MCF 10A (cell line): ENCODE measurements at regions of chr3 and their contacts with region 1.

Region 1: GRCh38 chr3:127455541-127456450 is 134.7 kb downstream of the TPRA1 start:
- DNase-seq: peak; percentile 76
- H3K4me3 Mint-ChIP-seq: peak overlapping the region; percentile 62
- H3K27ac Mint-ChIP-seq: no peak overlapping the region
- H3K4me1 Mint-ChIP-seq: peaks cover 28% of the 10 kb centered on the region
- H3K27me3 Mint-ChIP-seq: no peaks in the 10 kb centered on the region
- CTCF ChIP-seq: peak; percentile 98

Region 2: DNA sequence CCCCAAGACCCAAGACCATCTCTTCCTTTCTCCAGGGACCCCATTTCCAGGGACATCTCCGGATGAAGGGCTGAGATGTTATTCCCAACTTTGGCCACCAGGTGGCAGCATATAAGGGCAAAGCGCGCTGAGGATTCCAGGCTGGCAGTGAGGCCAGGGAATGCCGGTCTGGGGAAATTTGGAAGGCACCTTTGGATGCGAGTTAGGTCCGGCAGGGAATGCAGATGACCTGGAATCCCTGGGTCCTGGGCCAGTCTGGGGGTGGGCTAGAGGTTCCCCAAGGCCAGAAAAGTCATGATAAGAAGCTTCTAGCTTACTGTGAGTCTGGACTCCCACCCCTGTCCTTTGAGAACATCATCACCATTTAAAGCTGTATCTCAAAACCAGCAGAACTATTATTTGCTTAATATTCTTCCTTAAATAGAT is 933.4 kb before region 1 on chr3:
- CTCF ChIA-PET with region 1: interaction called, 5 read pairs
- POLR2A ChIA-PET with region 1: no interaction called
- intact Hi-C with region 1: loop called (anchors 2 kb)
- DNase-seq: peak; percentile 65
- H3K4me3 Mint-ChIP-seq: no peak overlapping the region
- H3K27ac Mint-ChIP-seq: no peak overlapping the region
- H3K4me1 Mint-ChIP-seq: no peaks in the 10 kb centered on the region
- H3K27me3 Mint-ChIP-seq: no peaks in the 10 kb centered on the region
- CTCF ChIP-seq: peak; percentile 90

Region 3: GRCh38 chr3:126679318-126679751 is 776.5 kb before region 1 on chr3:
- CTCF ChIA-PET with region 1: interaction called, 47 read pairs
- POLR2A ChIA-PET with region 1: no interaction called
- intact Hi-C with region 1: loop called (anchors 1 kb)
- DNase-seq: peak; percentile 80
- H3K4me3 Mint-ChIP-seq: no peak overlapping the region
- H3K27ac Mint-ChIP-seq: no peak overlapping the region
- H3K4me1 Mint-ChIP-seq: no peaks in the 10 kb centered on the region
- H3K27me3 Mint-ChIP-seq: peaks cover 17% of the 10 kb centered on the region
- CTCF ChIP-seq: peak; percentile 98

Region 4: GRCh38 chr3:126982471-126983175 is 473.2 kb before region 1 on chr3 and contains the start of gene PLXNA1:
- CTCF ChIA-PET with region 1: interaction called, 9 read pairs
- POLR2A ChIA-PET with region 1: interaction called, 16 read pairs
- intact Hi-C with region 1: loop called (anchors 2 kb)
- DNase-seq: peak; percentile 83
- H3K4me3 Mint-ChIP-seq: peak within 1 kb of the TSS; percentile 69
- H3K27ac Mint-ChIP-seq: no peak within 1 kb of the TSS
- H3K4me1 Mint-ChIP-seq: peaks cover 22% of the 10 kb centered on the region
- H3K27me3 Mint-ChIP-seq: no peaks in the 10 kb centered on the region
- CTCF ChIP-seq: peak; percentile 93
- total RNA-seq, gene PLXNA1: 42.1 and 48.4 TPM in 2 replicates

Region 5: GRCh38 chr3:127002195-127003174 is 453.3 kb before region 1 on chr3:
- CTCF ChIA-PET with region 1: interaction called, 3 read pairs
- POLR2A ChIA-PET with region 1: interaction called, 4 read pairs
- intact Hi-C with region 1: loop called (anchors 2 kb)
- DNase-seq: peak; percentile 75
- H3K4me3 Mint-ChIP-seq: peak overlapping the region; percentile 65
- H3K27ac Mint-ChIP-seq: peak overlapping the region; percentile 94
- H3K4me1 Mint-ChIP-seq: peaks cover 27% of the 10 kb centered on the region
- H3K27me3 Mint-ChIP-seq: no peaks in the 10 kb centered on the region
- CTCF ChIP-seq: no peak

Region 6: DNA sequence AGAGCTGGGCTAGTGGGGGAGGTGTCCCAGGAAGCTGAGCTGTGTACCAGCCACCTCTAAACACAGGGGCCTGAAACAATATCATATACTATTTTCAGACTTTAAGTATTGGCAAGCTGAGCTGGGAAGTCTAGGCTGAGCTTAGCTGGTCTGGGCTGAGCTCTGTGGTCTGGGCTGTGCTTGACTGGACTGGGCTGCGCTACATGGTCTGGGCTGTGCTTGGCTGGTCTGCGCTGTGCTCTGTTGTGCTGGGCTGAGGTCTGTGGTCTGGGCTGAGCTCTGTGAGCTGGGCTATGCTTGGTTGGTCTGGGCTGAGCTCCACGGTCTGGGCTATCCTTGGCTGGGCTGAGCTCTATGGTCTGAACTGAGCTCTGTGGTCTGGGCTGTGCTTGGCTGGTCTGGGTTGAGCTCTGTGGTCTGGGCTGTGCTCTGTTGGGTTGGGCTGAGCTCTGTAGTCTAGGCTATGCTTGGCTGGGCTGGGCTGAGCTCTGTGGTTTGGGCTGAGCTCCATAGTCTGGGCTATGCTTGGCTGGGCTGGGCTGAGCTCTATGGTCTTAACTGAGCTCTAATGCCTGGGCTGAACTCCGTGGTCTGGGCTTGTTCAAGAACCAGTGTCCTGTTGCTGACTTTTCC is 381.0 kb before region 1 on chr3:
- CTCF ChIA-PET with region 1: interaction called, 11 read pairs
- POLR2A ChIA-PET with region 1: interaction called, 4 read pairs
- intact Hi-C with region 1: no loop called
- DNase-seq: peak; percentile 66
- H3K4me3 Mint-ChIP-seq: peak overlapping the region; percentile 31
- H3K27ac Mint-ChIP-seq: peak overlapping the region; percentile 24
- H3K4me1 Mint-ChIP-seq: peaks cover 31% of the 10 kb centered on the region
- H3K27me3 Mint-ChIP-seq: no peaks in the 10 kb centered on the region
- CTCF ChIP-seq: no peak

Region 7: GRCh38 chr3:127800508-127800907 is 344.7 kb after region 1 on chr3:
- CTCF ChIA-PET with region 1: no interaction called
- POLR2A ChIA-PET with region 1: no interaction called
- intact Hi-C with region 1: no loop called
- DNase-seq: no peak
- H3K4me3 Mint-ChIP-seq: no peak overlapping the region
- H3K27ac Mint-ChIP-seq: no peak overlapping the region
- H3K4me1 Mint-ChIP-seq: peaks cover 42% of the 10 kb centered on the region
- H3K27me3 Mint-ChIP-seq: no peaks in the 10 kb centered on the region
- CTCF ChIP-seq: no peak